ENCODE measurements at regions of chr10 and their contacts with region 1.

Region 1: GRCh38 chr10:104121520-104122224 is at the start of gene SFR1:
- DNase-seq: peak; percentile 87 to 99
- ATAC-seq: peak; percentile 82 to 88
- H3K4me3 ChIP-seq: peak within 1 kb of the TSS; percentile 88
- H3K27ac ChIP-seq: peak within 1 kb of the TSS; percentile 98
- H3K4me1 ChIP-seq: peaks cover 51% of the 10 kb centered on the region
- CTCF ChIP-seq: peak; percentile 69
- EP300 ChIP-seq: no peak
- POLR2A ChIP-seq: peak; percentile 84
- RAD21 ChIP-seq: peak; percentile 67 to 83
- polyA plus RNA-seq, gene SFR1: 11.2 and 17.6 TPM in 2 replicates

Region 2: DNA sequence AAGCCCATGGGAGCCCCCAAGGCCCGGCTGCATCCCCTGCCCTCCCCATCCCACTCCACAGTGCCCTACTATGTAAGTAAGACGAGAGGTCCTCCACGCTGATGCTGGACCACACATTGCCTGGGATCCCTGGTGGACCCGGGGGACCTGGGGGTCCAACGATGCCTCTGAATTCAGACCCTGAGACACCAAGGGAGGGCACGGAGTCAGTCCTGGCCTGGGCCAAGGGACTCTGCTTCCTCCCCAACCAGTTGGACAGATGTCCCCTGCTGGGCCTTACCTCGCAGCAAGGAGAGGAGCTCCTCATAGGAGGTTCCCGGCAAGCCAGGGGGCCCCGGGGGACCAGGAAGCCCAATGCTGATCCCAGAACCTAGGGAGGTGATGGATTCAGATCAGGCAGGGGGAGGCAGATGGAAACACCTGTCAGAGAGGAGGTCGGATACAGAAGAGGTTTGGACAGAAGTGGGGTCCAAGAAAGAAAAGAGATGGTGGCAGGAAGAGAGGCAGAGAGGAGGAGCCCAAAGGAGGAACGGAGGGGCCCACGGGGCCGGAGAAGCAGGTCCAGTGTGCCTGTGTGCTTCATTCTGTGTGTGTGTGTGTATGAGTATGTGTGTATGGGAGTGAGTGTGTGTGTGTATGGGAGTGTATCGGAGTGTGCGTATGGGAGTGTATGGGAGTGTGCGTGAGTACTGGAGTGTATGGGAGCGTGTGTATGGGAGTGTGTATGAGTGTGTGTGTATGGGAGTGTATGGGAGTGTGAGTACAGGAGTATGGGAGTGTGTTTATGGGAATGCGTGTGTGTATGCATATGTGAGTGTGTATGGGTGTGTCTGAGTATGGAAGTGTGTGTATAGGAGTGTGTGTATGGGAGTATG is 86.2 kb before region 1 on chr10:
- CTCF ChIA-PET with region 1: interaction called, 60 read pairs
- POLR2A ChIA-PET with region 1: interaction called, 4 read pairs
- DNase-seq: no peak
- ATAC-seq: no peak; a peak in 1 of 6 replicates
- H3K4me3 ChIP-seq: no peak overlapping the region
- H3K27ac ChIP-seq: no peak overlapping the region
- H3K4me1 ChIP-seq: no peaks in the 10 kb centered on the region
- CTCF ChIP-seq: no peak
- EP300 ChIP-seq: no peak
- POLR2A ChIP-seq: no peak
- RAD21 ChIP-seq: no peak

Region 3: DNA sequence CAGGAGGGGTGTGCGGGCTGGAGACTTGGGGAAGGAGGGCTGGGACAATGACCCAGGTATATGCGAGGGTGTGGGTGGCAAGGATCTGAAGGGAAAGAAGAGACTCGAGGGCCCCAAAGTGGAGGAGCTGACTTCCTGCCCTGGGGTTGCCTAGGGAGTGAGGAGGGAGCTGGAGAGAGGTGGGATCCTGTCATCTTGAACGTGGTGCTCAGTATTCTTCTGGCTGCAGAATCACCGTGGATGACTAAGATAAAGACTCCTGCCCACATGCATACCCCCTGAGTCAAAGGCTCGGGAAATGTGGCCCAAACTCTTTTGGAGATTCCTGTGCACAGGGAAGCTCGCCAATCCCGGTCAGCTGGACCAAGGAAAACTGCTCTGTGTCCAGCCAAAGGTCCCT is 67.2 kb before region 1 on chr10:
- CTCF ChIA-PET with region 1: interaction called, 114 read pairs
- POLR2A ChIA-PET with region 1: interaction called, 32 read pairs
- DNase-seq: peak; percentile 36 to 54
- ATAC-seq: peak; percentile 72 to 74
- H3K4me3 ChIP-seq: no peak overlapping the region
- H3K27ac ChIP-seq: peak overlapping the region; percentile 63 to 79
- H3K4me1 ChIP-seq: peaks cover 61% of the 10 kb centered on the region
- CTCF ChIP-seq: no peak
- EP300 ChIP-seq: no peak
- POLR2A ChIP-seq: no peak
- RAD21 ChIP-seq: no peak

Region 4: DNA sequence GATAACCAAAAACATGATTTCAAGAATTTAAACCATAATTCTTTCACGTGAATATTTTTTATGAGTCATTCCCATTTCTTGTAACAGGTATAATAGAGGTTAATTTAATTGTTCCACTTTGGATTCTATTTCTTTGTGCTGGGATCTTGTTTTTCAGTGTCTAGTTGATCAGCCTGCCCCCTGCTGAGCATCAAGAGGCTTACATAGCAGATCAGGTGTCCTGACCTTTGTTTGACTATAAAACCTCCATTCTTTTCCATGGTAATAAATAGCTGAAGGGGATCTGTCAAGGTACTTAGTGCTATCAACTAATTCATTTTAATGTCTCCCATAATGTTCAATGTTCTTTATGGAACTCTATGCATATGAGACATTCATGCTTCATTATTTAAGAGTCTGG is 40.9 kb before region 1 on chr10:
- CTCF ChIA-PET with region 1: interaction called, 17 read pairs
- POLR2A ChIA-PET with region 1: interaction called, 6 read pairs
- DNase-seq: peak; percentile 20 to 59
- ATAC-seq: peak in 1 of 2 experiments; percentile 56; a peak in 2 of 6 replicates
- H3K4me3 ChIP-seq: no peak overlapping the region
- H3K27ac ChIP-seq: no peak overlapping the region
- H3K4me1 ChIP-seq: peaks cover 8% of the 10 kb centered on the region; the same call in 2 of the 3 replicates
- CTCF ChIP-seq: peak; percentile 24; the same call in 2 of the 3 replicates
- EP300 ChIP-seq: no peak
- POLR2A ChIP-seq: no peak
- RAD21 ChIP-seq: peak; percentile 18 to 41; a peak in 2 of 5 replicates

Region 5: GRCh38 chr10:104104926-104105325 is 16.7 kb before region 1 on chr10:
- CTCF ChIA-PET with region 1: interaction called, 24 read pairs
- POLR2A ChIA-PET with region 1: interaction called, 59 read pairs
- DNase-seq: peak in 1 of 2 experiments; percentile 43
- ATAC-seq: peak in 1 of 2 experiments; percentile 14; a peak in 1 of 6 replicates
- H3K4me3 ChIP-seq: no peak overlapping the region
- H3K27ac ChIP-seq: peak overlapping the region in 1 of 2 experiments; percentile 59; a peak in 3 of 6 replicates
- H3K4me1 ChIP-seq: peaks cover 15% of the 10 kb centered on the region
- CTCF ChIP-seq: no peak
- EP300 ChIP-seq: no peak
- POLR2A ChIP-seq: no peak
- RAD21 ChIP-seq: no peak

Region 6: GRCh38 chr10:104190695-104191094 is 69.0 kb after region 1 on chr10:
- CTCF ChIA-PET with region 1: no interaction called
- POLR2A ChIA-PET with region 1: no interaction called
- DNase-seq: no peak
- ATAC-seq: no peak
- H3K4me3 ChIP-seq: no peak overlapping the region
- H3K27ac ChIP-seq: no peak overlapping the region
- H3K4me1 ChIP-seq: no peaks in the 10 kb centered on the region
- CTCF ChIP-seq: no peak
- EP300 ChIP-seq: no peak
- POLR2A ChIP-seq: no peak
- RAD21 ChIP-seq: no peak

Region 7: GRCh38 chr10:104209575-104210198 is 88.0 kb after region 1 on chr10:
- CTCF ChIA-PET with region 1: interaction called, 10 read pairs
- POLR2A ChIA-PET with region 1: no interaction called
- DNase-seq: peak; percentile 48 to 51
- ATAC-seq: peak; percentile 47 to 90; a peak in 4 of 6 replicates
- H3K4me3 ChIP-seq: no peak overlapping the region
- H3K27ac ChIP-seq: no peak overlapping the region
- H3K4me1 ChIP-seq: no peaks in the 10 kb centered on the region
- CTCF ChIP-seq: peak; percentile 82
- EP300 ChIP-seq: no peak
- POLR2A ChIP-seq: no peak
- RAD21 ChIP-seq: peak; percentile 84 to 89